Activated naive CD4-positive, alpha-beta T cell treated with anti-CD3 and anti-CD28 coated beads for 36 hours (primary cell): ENCODE measurements at regions of chr13 and their contacts with region 1.

Region 1: GRCh38 chr13:110455941-110456340 is 105.6 kb downstream of the RAB20 start:
- DNase-seq: peak; percentile 84
- H3K4me3 Mint-ChIP-seq: peak overlapping the region; percentile 52
- H3K27ac Mint-ChIP-seq: no peak overlapping the region
- H3K4me1 Mint-ChIP-seq: peaks cover 4% of the 10 kb centered on the region
- H3K27me3 Mint-ChIP-seq: peaks cover 20% of the 10 kb centered on the region

Region 2: DNA sequence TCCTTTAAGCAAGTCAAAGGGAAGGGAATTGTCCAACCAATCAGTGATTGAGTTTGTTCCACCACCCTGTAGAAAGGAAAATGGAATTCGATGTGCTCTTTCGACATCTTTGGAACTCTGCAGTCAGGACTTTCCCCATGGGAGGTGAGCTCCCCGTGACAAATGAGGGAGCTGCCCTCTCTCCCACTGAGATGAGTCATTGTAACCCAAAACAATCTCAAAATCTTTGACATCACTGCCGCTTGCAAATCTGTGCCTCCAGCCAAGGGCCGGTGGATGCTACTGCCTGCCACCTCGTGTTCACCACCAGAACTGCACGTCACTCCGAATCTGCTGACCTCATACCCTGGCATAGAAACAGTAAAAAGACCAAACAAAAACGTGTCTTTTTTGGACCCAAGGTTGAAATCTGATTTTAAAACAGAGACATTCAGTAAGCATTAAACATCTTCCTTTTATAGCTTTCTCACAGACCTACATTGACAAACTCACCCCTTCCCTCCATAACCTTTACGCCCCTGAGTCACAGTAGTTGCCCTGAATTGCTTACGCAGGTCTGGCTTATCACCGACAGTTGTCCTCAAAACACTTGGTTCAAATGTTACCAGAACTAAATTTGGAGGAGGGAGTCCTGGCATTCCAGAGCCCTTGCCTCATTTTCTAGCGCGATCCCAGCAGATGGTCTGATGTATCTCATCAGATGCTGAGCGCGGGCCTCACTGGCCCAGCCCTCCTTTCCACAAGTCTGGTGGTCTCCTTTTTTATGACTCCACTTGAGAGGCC is 43.6 kb before region 1 on chr13:
- CTCF ChIA-PET with region 1: no interaction called
- intact Hi-C with region 1: no loop called
- DNase-seq: peak; percentile 88
- H3K4me3 Mint-ChIP-seq: no peak overlapping the region
- H3K27ac Mint-ChIP-seq: no peak overlapping the region
- H3K4me1 Mint-ChIP-seq: peaks cover 7% of the 10 kb centered on the region
- H3K27me3 Mint-ChIP-seq: peaks cover 73% of the 10 kb centered on the region

Region 3: GRCh38 chr13:110511509-110512181 is 55.7 kb after region 1 on chr13:
- CTCF ChIA-PET with region 1: interaction called, 11 read pairs
- intact Hi-C with region 1: no loop called
- DNase-seq: no peak
- H3K4me3 Mint-ChIP-seq: no peak overlapping the region
- H3K27ac Mint-ChIP-seq: no peak overlapping the region
- H3K4me1 Mint-ChIP-seq: peaks cover 6% of the 10 kb centered on the region
- H3K27me3 Mint-ChIP-seq: peaks cover 3% of the 10 kb centered on the region

Region 4: GRCh38 chr13:110561344-110562035 is 105.5 kb after region 1 on chr13 and contains the start of gene RAB20:
- CTCF ChIA-PET with region 1: interaction called, 5 read pairs
- intact Hi-C with region 1: loop called (anchors 1 kb)
- DNase-seq: peak; percentile 57
- H3K4me3 Mint-ChIP-seq: peak within 1 kb of the TSS; percentile 91
- H3K27ac Mint-ChIP-seq: peak within 1 kb of the TSS; percentile 48
- H3K4me1 Mint-ChIP-seq: peaks cover 15% of the 10 kb centered on the region
- H3K27me3 Mint-ChIP-seq: peaks cover 9% of the 10 kb centered on the region
- total RNA-seq, gene RAB20: 1.4 to 1.5 TPM

Region 5: DNA sequence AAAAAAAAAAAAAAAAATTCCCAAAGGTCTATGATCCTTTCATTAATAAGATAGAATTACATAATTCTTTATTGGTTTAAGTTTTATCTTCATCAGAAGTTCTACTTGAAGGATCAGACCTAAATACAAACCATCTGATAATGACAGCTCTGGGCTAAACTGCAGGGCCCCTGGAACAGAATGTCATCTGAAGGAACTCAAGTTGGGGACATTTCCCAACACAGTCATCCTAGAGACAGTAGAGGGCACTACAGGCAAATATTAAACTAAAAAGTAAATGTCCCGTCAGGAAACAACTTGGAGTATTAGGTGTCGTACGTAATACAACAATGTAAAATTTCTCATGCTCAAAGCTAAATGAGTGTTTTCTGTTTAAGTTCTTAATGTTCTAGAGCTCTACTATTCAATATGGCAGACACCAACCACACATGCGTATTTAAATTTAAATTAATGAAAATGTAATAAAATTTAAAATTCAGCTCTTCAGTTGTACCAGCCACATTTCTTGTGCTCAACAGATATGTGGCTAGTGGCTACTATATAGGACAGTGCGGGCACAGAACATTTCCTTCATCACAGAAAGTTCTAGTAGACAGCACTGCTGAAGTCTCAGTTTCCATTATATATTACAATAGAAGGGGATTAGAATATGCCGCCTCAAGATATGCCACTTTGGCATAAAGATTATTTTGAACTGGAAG is 137.6 kb after region 1 on chr13:
- CTCF ChIA-PET with region 1: interaction called, 10 read pairs
- intact Hi-C with region 1: loop called (anchors 5 kb)
- DNase-seq: peak; percentile 21
- H3K4me3 Mint-ChIP-seq: no peak overlapping the region
- H3K27ac Mint-ChIP-seq: no peak overlapping the region
- H3K4me1 Mint-ChIP-seq: peaks cover 3% of the 10 kb centered on the region
- H3K27me3 Mint-ChIP-seq: no peaks in the 10 kb centered on the region

Region 6: GRCh38 chr13:110819203-110820014 is 363.5 kb after region 1 on chr13:
- CTCF ChIA-PET with region 1: interaction called, 14 read pairs
- intact Hi-C with region 1: loop called (anchors 1 kb)
- DNase-seq: peak; percentile 88
- H3K4me3 Mint-ChIP-seq: no peak overlapping the region
- H3K27ac Mint-ChIP-seq: no peak overlapping the region
- H3K4me1 Mint-ChIP-seq: peaks cover 6% of the 10 kb centered on the region
- H3K27me3 Mint-ChIP-seq: no peaks in the 10 kb centered on the region